K562 (cell line): ENCODE measurements at regions of chr1 and their contacts with region 1.

Region 1: GRCh38 chr1:63367215-63368103 is at the start of gene ALG6:
- DNase-seq: peak; percentile 96 to 100 (median 99)
- ATAC-seq: peak; percentile 95
- H3K4me3 ChIP-seq: peak within 1 kb of the TSS; percentile 72
- H3K27ac ChIP-seq: peak within 1 kb of the TSS; percentile 86
- H3K4me1 ChIP-seq: peaks cover 6 to 11% of the 10 kb centered on the region in 2 experiments; a peak in 4 of 5 replicates
- H3K27me3 ChIP-seq: no peaks in the 10 kb centered on the region
- CTCF ChIP-seq: peak in 1 of 3 experiments; percentile 12; a peak in 1 of 6 replicates
- EP300 ChIP-seq: no peak
- POLR2A ChIP-seq: peak; percentile 97
- RAD21 ChIP-seq: 0 out of 4 replicates have a peak, but pooled peaks of 1 of the 2 experiments have one; percentile 3
- polyA plus RNA-seq, gene ALG6: 26.8 to 29.1 TPM

Region 2: GRCh38 chr1:63522891-63523728 is 155.7 kb after region 1 on chr1 and contains the starts of genes EFCAB7 and ITGB3BP:
- CTCF ChIA-PET with region 1: no interaction called
- POLR2A ChIA-PET with region 1: no interaction called
- in situ Hi-C with region 1: no loop called
- intact Hi-C with region 1: loop called (anchors 10 kb)
- DNase-seq: peak; percentile 71 to 93 (median 82)
- ATAC-seq: peak; percentile 98
- H3K4me3 ChIP-seq: peak within 1 kb of the TSS; percentile 67
- H3K27ac ChIP-seq: peak within 1 kb of the TSS; percentile 95
- H3K4me1 ChIP-seq: peaks cover 0 to 3% of the 10 kb centered on the region in 2 experiments; a peak in 2 of 5 replicates
- H3K27me3 ChIP-seq: no peaks in the 10 kb centered on the region
- CTCF ChIP-seq: no peak
- EP300 ChIP-seq: no peak
- POLR2A ChIP-seq: peak; percentile 93
- RAD21 ChIP-seq: no peak
- polyA plus RNA-seq, gene EFCAB7: 5.7 to 7.6 TPM
- polyA plus RNA-seq, gene ITGB3BP: 150 to 151 TPM

Region 3: DNA sequence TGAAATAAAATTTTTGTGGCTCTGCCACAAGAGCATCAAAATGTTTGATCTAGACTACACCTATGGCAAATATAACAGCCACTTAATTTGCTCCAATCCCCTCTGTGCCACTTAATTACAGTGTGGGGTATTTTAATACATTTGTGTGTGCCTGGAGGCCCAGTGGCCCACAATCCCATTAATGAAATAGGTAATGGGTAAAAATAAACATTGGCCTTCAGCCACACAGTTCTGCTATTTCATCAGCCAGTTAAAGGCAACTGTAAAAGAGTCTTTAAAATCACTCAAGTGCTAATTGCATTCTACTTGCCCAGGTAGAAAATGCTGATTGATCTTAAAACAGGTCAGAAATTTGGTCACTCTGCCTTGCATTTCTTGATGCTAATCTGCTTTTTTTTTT is 684.3 kb after region 1 on chr1:
- CTCF ChIA-PET with region 1: no interaction called
- POLR2A ChIA-PET with region 1: no interaction called
- in situ Hi-C with region 1: no loop called
- intact Hi-C with region 1: no loop called
- DNase-seq: no peak
- ATAC-seq: no peak
- H3K4me3 ChIP-seq: no peak overlapping the region
- H3K27ac ChIP-seq: no peak overlapping the region
- H3K4me1 ChIP-seq: no peaks in the 10 kb centered on the region
- H3K27me3 ChIP-seq: peaks cover 0 to 4% of the 10 kb centered on the region in 2 experiments; a peak in 1 of 5 replicates
- CTCF ChIP-seq: no peak
- EP300 ChIP-seq: no peak
- POLR2A ChIP-seq: no peak
- RAD21 ChIP-seq: no peak